CD8-positive, alpha-beta T cell (primary cell): ENCODE measurements at regions of chr22 and their contacts with region 1.

Region 1: GRCh38 chr22:38051900-38052862 is 5.0 kb upstream of the PICK1 start:
- DNase-seq: peak; percentile 61 to 89 (median 81)
- ATAC-seq: peak; percentile 86
- H3K4me3 ChIP-seq: no peak overlapping the region
- H3K4me3 Mint-ChIP-seq: no peak overlapping the region
- H3K27ac ChIP-seq: no peak overlapping the region
- H3K27ac Mint-ChIP-seq: no peak overlapping the region
- H3K4me1 ChIP-seq: peaks cover 13% of the 10 kb centered on the region
- H3K4me1 Mint-ChIP-seq: peaks cover 9% of the 10 kb centered on the region
- H3K27me3 ChIP-seq: no peaks in the 10 kb centered on the region
- H3K27me3 Mint-ChIP-seq: peaks cover 6% of the 10 kb centered on the region
- CTCF ChIP-seq: peak; percentile 92

Region 2: GRCh38 chr22:37519268-37520195 is 532.6 kb before region 1 on chr22 and contains the start of gene CARD10:
- CTCF ChIA-PET with region 1: no interaction called
- POLR2A ChIA-PET with region 1: no interaction called
- intact Hi-C with region 1: no loop called
- DNase-seq: peak in 3 of 9 experiments; percentile 25 to 42 (median 40)
- ATAC-seq: peak; percentile 70
- H3K4me3 ChIP-seq: peak within 1 kb of the TSS in 1 of 2 experiments; percentile 28
- H3K4me3 Mint-ChIP-seq: peak within 1 kb of the TSS; percentile 83
- H3K27ac ChIP-seq: no peak within 1 kb of the TSS
- H3K27ac Mint-ChIP-seq: peak within 1 kb of the TSS; percentile 37
- H3K4me1 ChIP-seq: peaks cover 7% of the 10 kb centered on the region
- H3K4me1 Mint-ChIP-seq: peaks cover 6% of the 10 kb centered on the region
- H3K27me3 ChIP-seq: peaks cover 7 to 14% of the 10 kb centered on the region in 2 experiments
- H3K27me3 Mint-ChIP-seq: peaks cover 40% of the 10 kb centered on the region
- CTCF ChIP-seq: no peak
- total RNA-seq, gene CARD10: 0.19 TPM in 1 of 2 experiments, not detected in the other

Region 3: DNA sequence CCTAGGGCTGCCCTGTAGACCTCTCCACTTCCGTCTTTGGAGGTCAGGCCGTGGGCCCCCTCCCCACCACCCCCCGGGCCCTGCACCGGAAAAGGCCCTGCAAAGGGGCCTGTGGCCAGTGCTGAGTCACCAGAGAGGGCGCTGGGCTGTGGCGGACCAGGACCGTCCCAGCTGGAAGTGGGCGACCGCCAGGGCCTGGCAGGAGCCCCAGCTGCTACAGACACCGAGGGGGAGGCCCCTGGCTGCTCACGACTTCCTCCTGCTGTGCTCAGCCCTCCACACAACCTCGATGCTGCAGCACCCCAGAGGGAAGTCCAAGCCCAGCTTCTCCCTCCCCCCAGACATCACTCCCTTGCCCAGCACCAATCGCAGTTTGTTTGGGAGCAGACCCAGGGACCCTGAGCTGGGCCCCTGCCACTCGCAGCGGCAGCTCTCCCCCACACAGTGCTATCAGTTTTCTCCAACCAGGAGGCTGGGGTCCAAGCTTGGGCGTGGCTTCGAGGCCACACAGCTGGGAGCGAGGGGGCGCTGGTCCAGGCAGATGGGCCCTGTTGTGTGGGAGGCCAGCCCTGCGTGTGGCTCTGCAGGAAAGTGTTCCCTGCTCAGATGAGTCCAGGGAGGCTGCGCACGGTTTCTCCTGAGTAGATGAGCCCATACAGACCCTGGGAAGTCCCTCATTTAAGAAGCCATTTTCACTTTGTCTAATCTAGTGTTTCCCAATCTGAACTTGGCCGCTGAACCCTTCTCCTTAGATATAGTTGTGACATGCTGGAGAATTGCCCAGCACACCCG is 418.4 kb before region 1 on chr22:
- CTCF ChIA-PET with region 1: no interaction called
- POLR2A ChIA-PET with region 1: no interaction called
- intact Hi-C with region 1: no loop called
- DNase-seq: peak in 8 of 9 experiments; percentile 42 to 84 (median 64)
- ATAC-seq: peak; percentile 62
- H3K4me3 ChIP-seq: peak overlapping the region; percentile 34 to 40
- H3K4me3 Mint-ChIP-seq: peak overlapping the region; percentile 74
- H3K27ac ChIP-seq: peak overlapping the region; percentile 39 to 79
- H3K27ac Mint-ChIP-seq: peak overlapping the region; percentile 92
- H3K4me1 ChIP-seq: peaks cover 89% of the 10 kb centered on the region
- H3K4me1 Mint-ChIP-seq: peaks cover 78% of the 10 kb centered on the region
- H3K27me3 ChIP-seq: no peaks in the 10 kb centered on the region
- H3K27me3 Mint-ChIP-seq: no peaks in the 10 kb centered on the region
- CTCF ChIP-seq: no peak

Region 4: GRCh38 chr22:38040953-38041759 is 11.0 kb before region 1 on chr22:
- CTCF ChIA-PET with region 1: interaction called, 13 read pairs
- POLR2A ChIA-PET with region 1: no interaction called
- intact Hi-C with region 1: no loop called
- DNase-seq: no peak
- ATAC-seq: no peak
- H3K4me3 ChIP-seq: no peak overlapping the region
- H3K4me3 Mint-ChIP-seq: no peak overlapping the region
- H3K27ac ChIP-seq: no peak overlapping the region
- H3K27ac Mint-ChIP-seq: no peak overlapping the region
- H3K4me1 ChIP-seq: no peaks in the 10 kb centered on the region
- H3K4me1 Mint-ChIP-seq: no peaks in the 10 kb centered on the region
- H3K27me3 ChIP-seq: no peaks in the 10 kb centered on the region
- H3K27me3 Mint-ChIP-seq: no peaks in the 10 kb centered on the region
- CTCF ChIP-seq: no peak

Region 5: GRCh38 chr22:38097557-38098409 is 45.6 kb after region 1 on chr22:
- CTCF ChIA-PET with region 1: interaction called, 13 read pairs
- POLR2A ChIA-PET with region 1: no interaction called
- intact Hi-C with region 1: loop called in 1 of 2 experiments (anchors 10 kb)
- DNase-seq: peak in 2 of 9 experiments; percentile 1 to 6
- ATAC-seq: no peak
- H3K4me3 ChIP-seq: no peak overlapping the region
- H3K4me3 Mint-ChIP-seq: no peak overlapping the region
- H3K27ac ChIP-seq: no peak overlapping the region
- H3K27ac Mint-ChIP-seq: no peak overlapping the region
- H3K4me1 ChIP-seq: no peaks in the 10 kb centered on the region
- H3K4me1 Mint-ChIP-seq: no peaks in the 10 kb centered on the region
- H3K27me3 ChIP-seq: no peaks in the 10 kb centered on the region
- H3K27me3 Mint-ChIP-seq: no peaks in the 10 kb centered on the region
- CTCF ChIP-seq: no peak

Region 6: DNA sequence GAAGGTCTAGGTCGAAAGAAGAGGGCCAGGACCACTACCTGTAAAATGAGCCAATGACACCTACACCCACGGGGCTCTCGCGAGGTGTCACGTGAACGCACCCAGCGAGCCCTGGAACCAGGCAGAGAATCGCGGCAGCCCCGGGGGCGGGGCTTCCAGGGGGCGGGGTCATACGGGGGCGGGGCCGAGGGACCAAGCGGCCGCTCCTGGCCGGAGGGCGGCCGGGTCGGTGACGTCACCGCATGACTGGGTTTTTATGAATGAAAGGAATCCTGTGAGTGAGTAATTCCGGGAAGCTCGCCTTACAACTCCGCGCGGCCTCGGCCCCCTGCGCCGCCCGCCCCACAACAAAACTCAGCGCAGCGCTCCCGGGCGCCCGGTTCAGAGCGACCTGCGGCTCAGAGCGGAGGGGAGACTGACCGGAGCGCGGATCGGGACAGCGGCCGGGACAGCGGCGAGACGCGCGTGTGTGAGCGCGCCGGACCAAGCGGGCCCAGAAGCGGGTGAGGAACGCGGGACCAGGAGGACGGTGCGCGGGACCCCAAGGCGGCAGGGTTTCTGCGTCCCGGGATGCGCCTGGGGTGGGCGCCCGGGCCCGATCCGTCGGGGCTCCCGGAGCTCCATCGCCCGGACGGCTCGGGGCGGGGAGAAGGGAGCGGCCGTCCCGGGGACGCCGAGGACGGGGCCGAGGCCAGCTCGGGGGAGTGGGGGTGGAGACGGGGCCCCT is 149.7 kb after region 1 on chr22 and contains the start of gene MAFF:
- CTCF ChIA-PET with region 1: no interaction called
- POLR2A ChIA-PET with region 1: no interaction called
- intact Hi-C with region 1: loop called in 1 of 2 experiments (anchors 10 kb)
- DNase-seq: peak; percentile 75 to 93 (median 88)
- ATAC-seq: peak; percentile 74
- H3K4me3 ChIP-seq: peak within 1 kb of the TSS; percentile 67 to 89
- H3K4me3 Mint-ChIP-seq: peak within 1 kb of the TSS; percentile 77
- H3K27ac ChIP-seq: peak within 1 kb of the TSS; percentile 63 to 98
- H3K27ac Mint-ChIP-seq: peak within 1 kb of the TSS; percentile 96
- H3K4me1 ChIP-seq: peaks cover 30% of the 10 kb centered on the region
- H3K4me1 Mint-ChIP-seq: peaks cover 32% of the 10 kb centered on the region
- H3K27me3 ChIP-seq: no peaks in the 10 kb centered on the region
- H3K27me3 Mint-ChIP-seq: no peaks in the 10 kb centered on the region
- CTCF ChIP-seq: no peak
- total RNA-seq, gene MAFF: 87.6 to 91.2 TPM

Region 7: DNA sequence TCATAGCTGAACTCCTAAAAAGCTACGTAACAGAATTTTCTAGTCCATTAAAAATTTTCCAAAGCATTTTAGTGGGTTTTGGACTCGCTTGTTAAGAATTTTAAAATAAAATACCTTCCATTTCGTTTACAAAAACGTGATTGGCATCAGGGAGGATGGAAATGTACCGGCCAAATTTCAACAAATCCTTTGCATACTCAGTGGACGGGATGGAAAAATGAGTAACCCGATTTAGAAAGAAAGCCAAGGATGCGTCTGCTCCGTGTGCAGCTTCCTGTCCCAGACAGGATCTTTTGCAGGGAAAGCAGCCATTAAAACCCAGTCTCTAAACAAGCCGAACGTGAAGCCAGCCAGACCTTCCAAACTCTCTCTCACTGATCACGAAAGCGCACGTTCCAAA is 205.0 kb after region 1 on chr22:
- CTCF ChIA-PET with region 1: no interaction called
- POLR2A ChIA-PET with region 1: no interaction called
- intact Hi-C with region 1: no loop called
- DNase-seq: no peak
- ATAC-seq: no peak
- H3K4me3 ChIP-seq: no peak overlapping the region
- H3K4me3 Mint-ChIP-seq: no peak overlapping the region
- H3K27ac ChIP-seq: no peak overlapping the region
- H3K27ac Mint-ChIP-seq: no peak overlapping the region
- H3K4me1 ChIP-seq: no peaks in the 10 kb centered on the region
- H3K4me1 Mint-ChIP-seq: peaks cover 19% of the 10 kb centered on the region
- H3K27me3 ChIP-seq: no peaks in the 10 kb centered on the region
- H3K27me3 Mint-ChIP-seq: no peaks in the 10 kb centered on the region
- CTCF ChIP-seq: no peak

Region 8: DNA sequence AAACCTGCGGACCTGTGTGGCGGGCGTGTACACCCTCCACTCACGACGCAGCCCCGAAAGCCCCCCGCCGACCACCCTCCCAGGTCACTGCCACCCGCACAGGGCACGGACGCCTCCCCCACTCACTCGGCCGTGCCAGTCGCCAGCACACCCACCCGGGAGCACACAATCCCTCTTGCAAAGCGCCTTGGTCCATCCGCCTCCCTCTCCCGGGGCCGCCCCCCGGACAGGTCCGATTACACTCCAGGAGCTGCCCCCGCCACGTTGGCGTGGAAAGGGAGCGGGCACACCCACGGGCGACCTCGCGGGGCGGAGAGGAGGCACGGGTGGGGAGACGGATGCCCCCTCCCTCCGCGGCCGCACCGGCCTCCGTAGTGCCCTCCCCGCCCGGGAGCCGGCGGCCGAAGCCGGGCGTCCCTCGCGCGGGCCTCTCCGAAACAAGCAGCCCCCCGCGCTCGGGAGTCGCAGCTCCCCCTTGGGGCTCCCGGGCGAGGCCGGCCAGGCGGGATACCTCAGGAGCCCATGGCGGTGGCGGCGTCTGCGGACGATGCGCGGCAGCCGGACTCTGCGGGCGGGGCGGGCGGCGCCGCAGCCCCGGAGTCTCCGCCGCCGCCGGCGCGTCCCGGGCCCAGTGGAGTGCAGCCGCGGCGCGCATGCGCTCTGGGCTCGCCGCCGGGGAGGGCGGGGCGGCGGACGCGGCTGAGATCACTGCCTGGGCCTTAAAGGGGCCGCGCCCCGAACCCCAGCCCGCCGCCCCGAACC is 220.4 kb after region 1 on chr22 and contains the start of gene TMEM184B:
- CTCF ChIA-PET with region 1: interaction called, 9 read pairs
- POLR2A ChIA-PET with region 1: no interaction called
- intact Hi-C with region 1: loop called in 1 of 2 experiments (anchors 2 kb)
- DNase-seq: peak; percentile 62 to 93 (median 78)
- ATAC-seq: peak; percentile 94
- H3K4me3 ChIP-seq: peak within 1 kb of the TSS; percentile 70 to 77
- H3K4me3 Mint-ChIP-seq: peak within 1 kb of the TSS; percentile 92
- H3K27ac ChIP-seq: peak within 1 kb of the TSS; percentile 59 to 93
- H3K27ac Mint-ChIP-seq: peak within 1 kb of the TSS; percentile 95
- H3K4me1 ChIP-seq: peaks cover 31% of the 10 kb centered on the region
- H3K4me1 Mint-ChIP-seq: peaks cover 50% of the 10 kb centered on the region
- H3K27me3 ChIP-seq: no peaks in the 10 kb centered on the region
- H3K27me3 Mint-ChIP-seq: peaks cover 3% of the 10 kb centered on the region
- CTCF ChIP-seq: no peak
- total RNA-seq, gene TMEM184B: 53.0 TPM

Region 9: DNA sequence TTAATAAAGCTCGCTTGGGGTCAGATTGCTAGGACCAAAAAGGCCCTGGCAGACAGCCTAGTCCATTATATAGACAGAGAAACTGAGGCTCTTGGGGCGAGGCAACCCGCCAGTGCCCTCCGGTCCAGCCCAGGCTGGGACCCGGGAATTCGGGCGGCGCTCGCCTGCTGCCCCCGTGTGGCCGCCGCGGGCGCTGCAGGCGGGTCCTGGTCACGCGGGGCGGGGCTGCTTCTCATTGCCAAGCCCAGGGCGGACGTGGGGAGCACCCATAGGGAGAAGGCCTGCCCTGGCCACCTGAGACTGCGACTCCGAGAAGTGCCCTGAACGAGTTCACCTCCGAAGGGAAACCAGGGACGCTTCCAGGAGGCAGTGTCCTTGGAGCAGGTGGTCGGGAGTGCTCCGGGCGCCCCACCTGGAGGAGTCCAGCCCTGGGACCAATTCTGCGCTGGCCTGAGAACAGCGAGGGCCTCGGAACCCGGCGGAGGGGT is 301.0 kb after region 1 on chr22:
- CTCF ChIA-PET with region 1: interaction called, 44 read pairs
- POLR2A ChIA-PET with region 1: no interaction called
- intact Hi-C with region 1: loop called (anchors 1 kb)
- DNase-seq: peak; percentile 46 to 87 (median 69)
- ATAC-seq: peak; percentile 98
- H3K4me3 ChIP-seq: no peak overlapping the region
- H3K4me3 Mint-ChIP-seq: no peak overlapping the region
- H3K27ac ChIP-seq: no peak overlapping the region
- H3K27ac Mint-ChIP-seq: no peak overlapping the region
- H3K4me1 ChIP-seq: peaks cover 6% of the 10 kb centered on the region
- H3K4me1 Mint-ChIP-seq: no peaks in the 10 kb centered on the region
- H3K27me3 ChIP-seq: no peaks in the 10 kb centered on the region
- H3K27me3 Mint-ChIP-seq: no peaks in the 10 kb centered on the region
- CTCF ChIP-seq: peak; percentile 99

Region 10: GRCh38 chr22:38705235-38706100 is 653.3 kb after region 1 on chr22 and contains the start of gene GTPBP1:
- CTCF ChIA-PET with region 1: interaction called, 6 read pairs
- POLR2A ChIA-PET with region 1: no interaction called
- intact Hi-C with region 1: loop called in 1 of 2 experiments (anchors 10 kb)
- DNase-seq: peak; percentile 91 to 100 (median 95)
- ATAC-seq: peak; percentile 76
- H3K4me3 ChIP-seq: peak within 1 kb of the TSS; percentile 63 to 84
- H3K4me3 Mint-ChIP-seq: peak within 1 kb of the TSS; percentile 93
- H3K27ac ChIP-seq: peak within 1 kb of the TSS; percentile 69 to 77
- H3K27ac Mint-ChIP-seq: peak within 1 kb of the TSS; percentile 95
- H3K4me1 ChIP-seq: peaks cover 47% of the 10 kb centered on the region
- H3K4me1 Mint-ChIP-seq: peaks cover 64% of the 10 kb centered on the region
- H3K27me3 ChIP-seq: no peaks in the 10 kb centered on the region
- H3K27me3 Mint-ChIP-seq: no peaks in the 10 kb centered on the region
- CTCF ChIP-seq: no peak
- total RNA-seq, gene GTPBP1: 341 to 346 TPM

Region 11: GRCh38 chr22:38862375-38863329 is 810.5 kb after region 1 on chr22:
- CTCF ChIA-PET with region 1: no interaction called
- POLR2A ChIA-PET with region 1: no interaction called
- intact Hi-C with region 1: no loop called
- DNase-seq: no peak
- ATAC-seq: peak; percentile 23
- H3K4me3 ChIP-seq: no peak overlapping the region
- H3K4me3 Mint-ChIP-seq: no peak overlapping the region
- H3K27ac ChIP-seq: no peak overlapping the region
- H3K27ac Mint-ChIP-seq: peak overlapping the region; percentile 45
- H3K4me1 ChIP-seq: no peaks in the 10 kb centered on the region
- H3K4me1 Mint-ChIP-seq: peaks cover 2% of the 10 kb centered on the region
- H3K27me3 ChIP-seq: no peaks in the 10 kb centered on the region
- H3K27me3 Mint-ChIP-seq: no peaks in the 10 kb centered on the region
- CTCF ChIP-seq: no peak